ENCODE measurements at regions of chr16 and their contacts with region 1.

Region 1: DNA sequence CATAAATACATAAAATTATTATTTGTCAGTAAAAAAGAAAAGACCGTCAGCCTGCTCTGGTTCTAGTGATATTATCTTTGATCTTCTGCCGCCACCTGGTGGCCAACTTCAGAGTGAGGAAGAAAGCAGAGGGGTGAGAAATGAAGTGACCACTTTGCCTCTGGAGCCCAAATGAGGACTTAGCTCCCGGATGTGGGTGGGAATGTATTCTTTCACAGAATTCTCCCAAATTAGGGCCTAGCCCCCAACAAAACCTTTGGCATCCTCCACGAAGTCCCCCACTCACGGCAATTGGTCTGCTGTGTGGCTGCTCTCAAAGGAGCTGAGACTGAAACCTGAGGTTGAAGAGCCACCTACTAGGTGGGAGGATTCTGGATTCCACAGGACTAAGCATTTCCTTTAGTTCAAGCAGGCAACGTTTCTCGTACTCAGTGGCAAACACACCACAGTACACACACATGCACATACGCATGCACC is 4.9 kb upstream of the ZNF267 start:
- DNase-seq: peak; percentile 90
- H3K4me3 Mint-ChIP-seq: peak overlapping the region; percentile 46
- H3K27ac Mint-ChIP-seq: peak overlapping the region; percentile 82
- H3K4me1 Mint-ChIP-seq: peaks cover 50% of the 10 kb centered on the region
- H3K27me3 Mint-ChIP-seq: no peaks in the 10 kb centered on the region

Region 2: GRCh38 chr16:31032736-31033708 is 835.7 kb before region 1 on chr16 and contains the start of gene STX4:
- CTCF ChIA-PET with region 1: no interaction called
- intact Hi-C with region 1: loop called (anchors 1 kb)
- DNase-seq: peak; percentile 99
- H3K4me3 Mint-ChIP-seq: peak within 1 kb of the TSS; percentile 96
- H3K27ac Mint-ChIP-seq: peak within 1 kb of the TSS; percentile 93
- H3K4me1 Mint-ChIP-seq: peaks cover 22% of the 10 kb centered on the region
- H3K27me3 Mint-ChIP-seq: no peaks in the 10 kb centered on the region
- total RNA-seq, gene STX4: 32.9 to 38.0 TPM

Region 3: GRCh38 chr16:31265329-31266245 is 603.1 kb before region 1 on chr16:
- CTCF ChIA-PET with region 1: interaction called, 4 read pairs
- intact Hi-C with region 1: loop called (anchors 5 kb)
- DNase-seq: peak; percentile 92
- H3K4me3 Mint-ChIP-seq: no peak overlapping the region
- H3K27ac Mint-ChIP-seq: peak overlapping the region; percentile 79
- H3K4me1 Mint-ChIP-seq: peaks cover 31% of the 10 kb centered on the region
- H3K27me3 Mint-ChIP-seq: peaks cover under 1% of the 10 kb centered on the region

Region 4: DNA sequence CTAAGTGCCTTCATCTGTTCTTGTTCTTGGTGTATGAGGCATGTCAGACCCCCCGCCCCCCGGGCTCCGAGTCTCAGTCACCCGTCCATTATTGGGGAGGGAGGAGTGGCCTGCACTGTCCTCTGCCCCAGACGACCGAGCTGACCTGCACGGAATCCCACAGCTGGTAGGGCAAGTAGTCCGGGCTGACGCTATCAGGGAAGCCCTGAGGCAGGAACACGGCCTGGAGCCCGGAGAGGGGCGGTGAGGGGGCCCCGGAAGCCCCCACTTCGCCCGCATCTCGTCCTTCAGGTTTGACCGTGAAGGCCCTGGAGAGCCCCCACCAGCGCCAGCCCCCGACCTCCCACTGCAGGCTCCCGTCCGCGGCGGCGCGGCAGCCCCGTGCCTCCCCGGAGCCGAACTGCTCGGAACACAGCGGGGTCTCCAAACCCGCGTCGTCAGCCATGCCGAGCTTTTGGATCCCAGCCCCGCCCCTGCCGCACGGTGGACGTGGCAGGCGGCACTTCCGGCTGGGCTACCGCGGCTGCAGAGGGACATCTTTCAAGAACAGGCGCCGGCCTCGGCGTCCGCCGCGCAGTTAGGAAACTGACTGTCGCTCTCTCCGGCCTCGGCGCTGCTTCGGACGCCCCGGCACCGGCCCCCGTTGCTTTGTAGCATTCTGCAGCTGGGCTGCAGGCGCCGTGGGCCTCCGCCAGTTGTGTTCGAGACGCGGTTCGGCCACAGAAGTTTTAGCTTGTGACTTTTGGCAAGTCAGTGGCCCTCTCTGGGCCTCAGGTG is 360.6 kb before region 1 on chr16 and contains the start of gene RUSF1:
- CTCF ChIA-PET with region 1: no interaction called
- intact Hi-C with region 1: loop called (anchors 2 kb)
- DNase-seq: peak; percentile 91
- H3K4me3 Mint-ChIP-seq: peak within 1 kb of the TSS; percentile 92
- H3K27ac Mint-ChIP-seq: peak within 1 kb of the TSS; percentile 97
- H3K4me1 Mint-ChIP-seq: peaks cover 42% of the 10 kb centered on the region
- H3K27me3 Mint-ChIP-seq: no peaks in the 10 kb centered on the region
- total RNA-seq, gene RUSF1: 24.0 to 26.0 TPM

Region 5: DNA sequence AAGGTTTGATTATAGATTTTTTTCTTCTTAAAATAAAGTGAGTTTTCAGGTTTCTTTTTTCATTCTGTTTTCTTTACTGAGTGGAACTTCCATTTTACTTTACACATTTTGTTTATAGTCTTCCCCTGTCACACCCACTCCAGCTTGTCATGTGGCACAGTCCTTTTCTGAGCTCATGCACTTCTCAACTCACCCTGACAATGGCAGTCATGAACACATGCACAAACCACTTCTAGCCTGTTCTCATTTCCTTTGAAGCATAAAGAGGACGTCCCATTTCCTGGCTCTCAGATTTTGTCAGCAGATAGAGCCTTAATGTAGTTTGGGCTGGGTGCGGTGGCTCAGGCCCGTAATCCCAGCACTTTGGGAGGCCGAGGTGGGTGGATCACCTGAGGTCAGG is 173.1 kb before region 1 on chr16:
- CTCF ChIA-PET with region 1: interaction called, 5 read pairs
- intact Hi-C with region 1: loop called (anchors 1 kb)
- DNase-seq: peak; percentile 75
- H3K4me3 Mint-ChIP-seq: no peak overlapping the region
- H3K27ac Mint-ChIP-seq: no peak overlapping the region
- H3K4me1 Mint-ChIP-seq: peaks cover 5% of the 10 kb centered on the region
- H3K27me3 Mint-ChIP-seq: no peaks in the 10 kb centered on the region

Region 6: GRCh38 chr16:31718998-31719397 is 149.7 kb before region 1 on chr16:
- CTCF ChIA-PET with region 1: no interaction called
- intact Hi-C with region 1: no loop called
- DNase-seq: no peak
- H3K4me3 Mint-ChIP-seq: no peak overlapping the region
- H3K27ac Mint-ChIP-seq: no peak overlapping the region
- H3K4me1 Mint-ChIP-seq: peaks cover 30% of the 10 kb centered on the region
- H3K27me3 Mint-ChIP-seq: no peaks in the 10 kb centered on the region

Region 7: DNA sequence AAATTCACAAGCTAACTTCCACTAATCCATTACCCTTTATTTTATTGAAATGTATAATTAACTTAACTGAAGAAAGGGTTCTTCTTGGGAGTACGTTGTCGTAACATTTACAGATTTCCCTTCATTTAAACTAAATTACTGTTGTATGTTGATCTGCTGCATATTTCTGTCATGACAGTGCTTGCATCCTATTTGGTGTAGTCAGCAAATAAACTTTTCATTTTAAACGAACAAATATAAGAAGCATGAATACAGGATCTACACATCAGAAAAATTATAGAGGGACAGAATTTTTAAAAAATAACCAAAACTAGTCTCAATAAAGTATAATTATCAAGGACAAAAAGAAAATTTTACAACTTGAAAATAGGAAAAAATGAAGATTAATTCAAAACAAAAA is 61.6 kb before region 1 on chr16:
- CTCF ChIA-PET with region 1: no interaction called
- intact Hi-C with region 1: no loop called
- DNase-seq: no peak
- H3K4me3 Mint-ChIP-seq: no peak overlapping the region
- H3K27ac Mint-ChIP-seq: no peak overlapping the region
- H3K4me1 Mint-ChIP-seq: no peaks in the 10 kb centered on the region
- H3K27me3 Mint-ChIP-seq: peaks cover 5% of the 10 kb centered on the region

Region 8: GRCh38 chr16:31916056-31916488 is 47.3 kb after region 1 on chr16:
- CTCF ChIA-PET with region 1: no interaction called
- intact Hi-C with region 1: no loop called
- DNase-seq: no peak
- H3K4me3 Mint-ChIP-seq: no peak overlapping the region
- H3K27ac Mint-ChIP-seq: peak overlapping the region; percentile 18
- H3K4me1 Mint-ChIP-seq: peaks cover 12% of the 10 kb centered on the region
- H3K27me3 Mint-ChIP-seq: no peaks in the 10 kb centered on the region

Measured in activated naive CD4-positive, alpha-beta T cell treated with anti-CD3 and anti-CD28 coated beads for 36 hours (primary cell).